Common myeloid progenitor, CD34-positive (primary cell): ENCODE measurements at regions of chr15 and their contacts with region 1.

Region 1: DNA sequence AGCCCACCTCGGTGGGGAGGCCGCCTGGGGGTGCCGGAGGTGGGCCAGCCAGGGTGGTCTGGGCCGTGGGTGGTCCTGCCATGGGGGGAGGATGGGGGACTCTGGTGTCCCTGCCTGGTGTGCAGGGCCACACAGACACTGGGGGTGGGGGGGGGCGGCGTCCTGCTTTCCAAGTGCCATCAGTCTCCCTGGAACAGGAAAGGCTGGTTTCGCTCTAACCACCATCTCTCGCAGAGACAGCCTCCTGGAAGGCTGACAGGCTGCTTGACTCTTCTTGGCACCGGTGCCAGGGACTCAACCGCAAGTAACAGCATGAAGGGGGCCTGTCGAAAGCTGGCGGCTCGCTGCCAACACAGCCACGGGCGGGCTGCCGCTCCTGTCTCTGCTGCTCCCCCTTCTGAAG is 40.3 kb downstream of the RGMA start:
- DNase-seq: peak; percentile 86 to 97 (median 96)
- H3K4me3 ChIP-seq: no peak overlapping the region
- H3K27ac ChIP-seq: peak overlapping the region in 1 of 2 experiments; percentile 58
- H3K4me1 ChIP-seq: peaks cover 0 to 52% (median 21%) of the 10 kb centered on the region in 4 experiments
- H3K27me3 ChIP-seq: no peaks in the 10 kb centered on the region

Region 2: GRCh38 chr15:93030430-93031105 is 18.2 kb before region 1 on chr15:
- CTCF ChIA-PET with region 1: interaction called, 472 read pairs
- POLR2A ChIA-PET with region 1: no interaction called
- DNase-seq: peak; percentile 61 to 71 (median 66)
- H3K4me3 ChIP-seq: peak overlapping the region in 1 of 7 experiments; percentile 45
- H3K27ac ChIP-seq: no peak overlapping the region
- H3K4me1 ChIP-seq: peaks cover 0 to 59% (median 17%) of the 10 kb centered on the region in 4 experiments
- H3K27me3 ChIP-seq: no peaks in the 10 kb centered on the region

Region 3: GRCh38 chr15:93060336-93061263 is 11.8 kb after region 1 on chr15:
- CTCF ChIA-PET with region 1: interaction called, 31 read pairs
- POLR2A ChIA-PET with region 1: no interaction called
- DNase-seq: no peak
- H3K4me3 ChIP-seq: no peak overlapping the region
- H3K27ac ChIP-seq: no peak overlapping the region
- H3K4me1 ChIP-seq: peaks cover 0 to 48% (median 9%) of the 10 kb centered on the region in 4 experiments
- H3K27me3 ChIP-seq: peaks cover 0 to 2% (median 0%) of the 10 kb centered on the region in 5 experiments

Region 4: DNA sequence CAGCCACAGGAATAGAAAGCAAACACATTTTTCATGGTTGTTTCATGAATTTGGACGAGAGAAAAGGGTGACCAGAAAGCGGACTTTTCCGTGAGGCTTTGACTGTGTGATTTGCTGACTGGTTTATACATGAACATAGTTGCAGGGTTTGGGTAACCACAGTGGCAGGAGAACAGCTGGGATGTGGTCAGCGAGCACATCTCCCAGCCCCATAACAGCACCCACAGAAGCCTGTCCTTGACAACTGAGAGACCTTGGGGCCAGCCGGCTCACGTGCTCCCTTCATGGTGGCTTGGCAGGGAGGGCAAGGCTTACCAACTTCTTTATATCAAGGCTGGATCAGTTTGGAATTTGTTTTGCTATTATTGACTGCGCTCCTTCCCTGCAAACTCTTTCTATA is 53.5 kb after region 1 on chr15:
- CTCF ChIA-PET with region 1: no interaction called
- POLR2A ChIA-PET with region 1: no interaction called
- DNase-seq: no peak
- H3K4me3 ChIP-seq: no peak overlapping the region
- H3K27ac ChIP-seq: no peak overlapping the region
- H3K4me1 ChIP-seq: no peaks in the 10 kb centered on the region
- H3K27me3 ChIP-seq: peaks cover 0 to 6% (median 2%) of the 10 kb centered on the region in 5 experiments